Posterior vena cava (tissue), 2 donors: ENCODE measurements at regions of chr1 and their contacts with region 1.

Region 1: DNA sequence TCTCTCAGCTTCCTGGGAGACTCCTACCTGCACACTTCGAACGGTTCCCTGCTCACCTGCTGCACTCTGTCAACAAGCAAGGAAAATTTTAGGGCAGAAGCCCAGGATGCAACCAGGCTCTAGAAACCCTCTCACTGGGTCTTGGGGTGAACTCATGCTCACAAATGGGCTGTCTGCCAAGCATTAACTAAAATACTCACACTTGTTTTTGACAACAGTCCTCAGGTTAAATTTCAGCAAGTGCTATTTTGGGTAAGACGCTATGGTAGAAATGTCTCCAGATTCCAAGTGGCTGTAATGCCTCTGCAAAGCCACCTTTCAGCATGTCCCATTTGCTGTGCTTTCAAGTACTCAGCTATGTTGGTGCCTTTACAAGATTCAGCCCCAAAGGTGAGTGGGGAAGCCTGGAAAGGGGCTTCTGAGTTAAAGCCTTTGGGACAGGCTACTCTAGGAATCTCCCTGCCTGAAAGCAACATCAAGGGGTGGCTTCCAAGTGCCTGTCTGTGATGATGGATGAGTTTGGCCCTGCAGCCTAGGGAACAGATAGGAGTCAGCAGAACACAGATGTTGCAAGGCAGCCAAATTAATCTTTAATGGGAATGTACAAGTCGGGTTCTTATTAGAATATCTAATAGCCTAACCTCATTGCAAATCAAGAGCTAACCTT is 211.9 kb upstream of the SPAG17 start:
- DNase-seq: no peak

Region 2: DNA sequence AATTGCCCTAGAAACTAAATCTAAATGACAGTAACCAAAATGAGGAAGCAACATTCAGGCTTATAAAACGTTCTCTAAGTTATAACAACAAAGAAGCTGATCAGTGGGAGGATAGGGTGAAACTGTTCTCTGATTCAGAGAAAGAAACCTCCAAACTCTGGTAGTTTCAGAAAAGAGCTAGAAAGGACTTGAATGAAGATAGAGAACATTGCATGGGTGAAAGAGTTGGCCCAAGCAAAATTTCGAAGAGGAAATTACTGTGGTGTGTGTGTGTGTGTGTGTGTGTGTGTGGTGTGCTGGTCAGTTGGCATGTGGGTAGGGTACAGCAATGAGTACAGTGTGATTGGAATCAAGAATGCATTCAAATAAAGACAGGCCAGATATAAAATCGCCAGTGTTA is 195.4 kb before region 1 on chr1:
- intact Hi-C with region 1: no loop called
- DNase-seq: no peak

Region 3: GRCh38 chr1:118371612-118372011 is 25.4 kb before region 1 on chr1:
- intact Hi-C with region 1: loop called in 1 of 2 experiments (anchors 1 kb)
- DNase-seq: no peak